ENCODE measurements at regions of chr9 and their contacts with region 1.

Region 1: DNA sequence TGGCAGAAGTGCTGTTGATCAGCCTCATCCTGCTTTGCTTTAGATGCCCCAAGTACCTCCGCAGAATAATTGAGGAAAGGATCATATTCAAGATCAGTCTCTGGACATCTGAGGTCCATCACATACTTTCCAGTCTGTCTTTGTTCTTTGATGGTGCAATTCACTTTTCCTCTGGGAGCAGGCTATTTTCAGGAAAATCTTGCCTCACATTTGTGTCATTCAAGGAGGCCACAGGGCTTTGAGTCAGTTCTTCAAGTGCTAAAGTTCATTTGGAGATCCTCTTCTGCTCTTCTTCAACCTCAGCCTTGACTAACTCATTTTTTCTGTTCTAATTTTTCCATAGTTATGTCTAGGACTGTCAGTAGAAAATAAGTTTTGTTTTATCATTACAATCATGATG is 18.6 kb downstream of the EQTN start:
- DNase-seq: no peak
- H3K4me3 ChIP-seq: no peak overlapping the region
- H3K27ac ChIP-seq: peak overlapping the region in 1 of 2 donors; percentile 43
- H3K4me1 ChIP-seq: no peaks in the 10 kb centered on the region
- H3K27me3 ChIP-seq: no peaks in the 10 kb centered on the region
- CTCF ChIP-seq: no peak
- POLR2A ChIP-seq: no peak

Region 2: GRCh38 chr9:27247756-27248155 is 30.6 kb before region 1 on chr9:
- intact Hi-C with region 1: loop called (anchors 2 kb)
- DNase-seq: no peak
- H3K4me3 ChIP-seq: no peak overlapping the region
- H3K27ac ChIP-seq: no peak overlapping the region
- H3K4me1 ChIP-seq: no peaks in the 10 kb centered on the region
- H3K27me3 ChIP-seq: no peaks in the 10 kb centered on the region
- CTCF ChIP-seq: peak in 2 of 3 donors; percentile 23 to 32
- POLR2A ChIP-seq: no peak

Measured in breast epithelium (tissue), 4 donors.